Activated CD4-positive, alpha-beta T cell treated with anti-CD3 and anti-CD28 coated beads for 36 hours (primary cell): ENCODE measurements at regions of chr15 and their contacts with region 1.

Region 1: GRCh38 chr15:65304389-65305144 is at the start of gene RNU5B-1:
- DNase-seq: peak; percentile 87
- ATAC-seq: peak; percentile 75
- H3K4me3 Mint-ChIP-seq: peak within 1 kb of the TSS; percentile 89
- H3K27ac Mint-ChIP-seq: peak within 1 kb of the TSS; percentile 98
- H3K4me1 Mint-ChIP-seq: peaks cover 36% of the 10 kb centered on the region
- H3K27me3 Mint-ChIP-seq: no peaks in the 10 kb centered on the region
- total RNA-seq, gene RNU5B-1: not detected

Region 2: DNA sequence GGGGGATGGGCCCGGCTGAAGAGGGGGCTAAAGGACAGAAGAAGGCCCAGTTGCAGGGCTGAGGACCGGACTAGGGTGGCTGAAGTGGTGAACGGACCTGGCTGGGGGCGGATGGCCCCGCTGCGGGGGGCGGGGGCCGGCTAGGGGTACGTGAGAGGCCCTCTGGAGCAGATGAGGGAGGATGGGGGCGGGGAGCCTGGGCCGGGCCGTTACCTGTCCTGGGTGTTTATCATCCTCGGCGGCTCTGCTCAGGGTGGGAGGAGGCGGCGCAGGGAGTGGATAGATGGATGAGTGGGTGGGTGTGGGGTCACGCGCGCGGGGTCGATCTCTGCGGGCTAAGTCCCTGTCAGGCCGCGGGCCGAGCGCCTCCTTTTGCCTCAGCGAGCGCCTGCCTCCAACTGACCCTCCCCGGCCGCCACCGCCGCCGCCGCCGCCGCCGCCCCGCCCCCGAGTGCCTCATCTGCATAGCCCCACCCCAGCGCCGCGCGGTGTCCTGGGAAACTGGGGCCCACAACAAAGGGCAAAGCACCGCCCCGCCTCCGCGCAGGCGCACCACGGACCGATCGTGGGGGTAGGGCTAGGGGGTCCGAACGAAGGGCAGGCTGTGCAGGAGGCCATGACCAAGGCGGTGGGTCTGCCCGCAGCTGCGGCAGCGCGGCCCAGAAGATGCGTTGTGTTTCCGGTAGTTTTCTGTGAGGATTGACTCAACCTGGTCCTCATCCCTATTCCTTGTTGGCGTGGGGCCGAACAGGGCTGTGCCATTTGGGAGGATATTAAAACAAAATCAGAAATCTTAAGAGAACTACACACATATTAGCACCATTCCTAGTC is 601.5 kb before region 1 on chr15:
- CTCF ChIA-PET with region 1: no interaction called
- POLR2A ChIA-PET with region 1: interaction called, 4 read pairs
- intact Hi-C with region 1: loop called in 1 of 2 experiments (anchors 10 kb)
- DNase-seq: peak; percentile 98
- ATAC-seq: peak; percentile 91
- H3K4me3 Mint-ChIP-seq: peak overlapping the region; percentile 72
- H3K27ac Mint-ChIP-seq: peak overlapping the region; percentile 86
- H3K4me1 Mint-ChIP-seq: peaks cover 52% of the 10 kb centered on the region
- H3K27me3 Mint-ChIP-seq: no peaks in the 10 kb centered on the region

Region 3: DNA sequence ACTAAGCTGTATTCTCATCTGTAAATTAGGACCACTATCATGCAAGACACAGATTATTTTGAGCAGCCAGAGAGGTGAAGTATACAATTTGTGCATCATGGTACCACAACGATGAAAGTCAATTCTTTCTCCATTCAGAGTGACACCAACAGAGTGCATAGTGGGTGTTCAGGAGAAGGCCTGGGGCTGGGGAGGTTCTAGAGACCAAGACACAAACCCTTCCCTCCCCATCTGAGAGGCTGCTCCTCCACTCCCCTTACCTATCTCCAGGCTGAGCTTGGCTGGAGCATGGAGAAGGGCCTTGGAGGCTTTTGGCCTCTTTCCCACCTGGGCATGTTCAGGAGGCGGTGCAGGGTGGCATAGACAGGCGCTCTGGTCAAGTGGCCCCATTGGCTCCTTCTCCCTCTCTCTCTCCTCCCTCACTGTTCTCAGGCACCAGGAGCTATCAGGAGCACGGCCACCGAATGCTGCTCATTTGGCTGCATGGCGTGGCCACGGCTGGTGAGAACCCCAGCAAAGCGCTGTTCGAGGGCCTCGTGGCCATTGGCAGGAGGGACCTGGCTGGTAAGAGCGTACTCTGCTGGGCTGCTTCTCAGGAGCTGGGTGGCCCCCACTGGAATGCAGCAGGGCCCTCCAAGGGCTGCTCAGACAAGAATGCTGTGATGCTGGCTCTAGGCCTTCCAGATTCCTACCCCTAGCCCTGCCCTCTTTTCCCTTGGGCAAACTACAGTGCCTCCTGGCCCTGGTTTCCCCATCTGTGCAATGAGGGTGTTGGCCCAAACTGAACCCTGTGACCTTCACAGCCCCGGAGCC is 355.0 kb before region 1 on chr15:
- CTCF ChIA-PET with region 1: no interaction called
- POLR2A ChIA-PET with region 1: no interaction called
- intact Hi-C with region 1: no loop called
- DNase-seq: no peak
- ATAC-seq: no peak
- H3K4me3 Mint-ChIP-seq: no peak overlapping the region
- H3K27ac Mint-ChIP-seq: no peak overlapping the region
- H3K4me1 Mint-ChIP-seq: peaks cover 1% of the 10 kb centered on the region
- H3K27me3 Mint-ChIP-seq: no peaks in the 10 kb centered on the region

Region 4: DNA sequence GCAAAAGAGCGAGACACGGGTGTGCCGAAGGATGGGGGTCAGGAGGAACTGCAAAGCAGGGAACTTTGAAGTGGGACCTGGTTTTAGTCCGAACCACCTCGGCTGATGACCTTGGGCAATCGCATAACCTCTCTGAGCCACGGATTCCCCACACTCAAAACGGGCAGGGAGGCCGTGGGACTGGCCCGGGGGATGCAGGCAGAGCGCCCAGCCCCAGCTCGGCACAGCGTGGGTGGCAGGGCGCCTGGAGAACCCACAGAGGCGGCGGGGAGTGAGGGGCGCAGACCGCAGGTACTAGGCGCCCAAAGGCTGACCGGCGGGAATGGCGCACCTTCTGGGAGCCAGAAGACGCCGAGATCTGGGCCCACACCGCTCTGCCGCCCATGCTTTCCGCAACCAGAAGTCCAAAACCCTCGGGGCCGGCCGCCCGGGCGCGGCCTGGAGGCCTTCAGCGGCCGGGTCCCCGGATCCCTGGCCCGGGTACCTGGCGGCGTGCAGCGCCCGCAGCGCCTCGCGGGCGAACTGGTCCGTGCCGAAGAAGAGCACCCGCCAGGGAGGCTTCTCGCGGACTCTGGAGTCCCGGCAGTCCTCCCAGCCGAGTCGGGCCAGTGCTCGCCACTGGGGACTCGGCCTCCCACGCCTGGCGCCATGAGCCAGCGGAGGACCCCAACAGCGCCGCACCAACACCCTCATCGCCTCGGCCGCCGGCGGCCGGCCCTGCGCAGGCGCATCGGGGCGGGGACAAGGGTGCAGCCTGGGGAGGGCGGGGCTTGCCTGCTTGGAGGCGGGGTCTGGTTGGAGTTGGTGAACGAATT is 275.4 kb before region 1 on chr15 and contains the start of gene MTFMT:
- CTCF ChIA-PET with region 1: interaction called, 4 read pairs
- POLR2A ChIA-PET with region 1: interaction called, 5 read pairs
- intact Hi-C with region 1: loop called (anchors 2 to 5 kb)
- DNase-seq: peak; percentile 96
- ATAC-seq: peak; percentile 95
- H3K4me3 Mint-ChIP-seq: peak within 1 kb of the TSS; percentile 85
- H3K27ac Mint-ChIP-seq: peak within 1 kb of the TSS; percentile 79
- H3K4me1 Mint-ChIP-seq: peaks cover 20% of the 10 kb centered on the region
- H3K27me3 Mint-ChIP-seq: no peaks in the 10 kb centered on the region
- total RNA-seq, gene MTFMT: 19.0 to 19.9 TPM

Region 5: DNA sequence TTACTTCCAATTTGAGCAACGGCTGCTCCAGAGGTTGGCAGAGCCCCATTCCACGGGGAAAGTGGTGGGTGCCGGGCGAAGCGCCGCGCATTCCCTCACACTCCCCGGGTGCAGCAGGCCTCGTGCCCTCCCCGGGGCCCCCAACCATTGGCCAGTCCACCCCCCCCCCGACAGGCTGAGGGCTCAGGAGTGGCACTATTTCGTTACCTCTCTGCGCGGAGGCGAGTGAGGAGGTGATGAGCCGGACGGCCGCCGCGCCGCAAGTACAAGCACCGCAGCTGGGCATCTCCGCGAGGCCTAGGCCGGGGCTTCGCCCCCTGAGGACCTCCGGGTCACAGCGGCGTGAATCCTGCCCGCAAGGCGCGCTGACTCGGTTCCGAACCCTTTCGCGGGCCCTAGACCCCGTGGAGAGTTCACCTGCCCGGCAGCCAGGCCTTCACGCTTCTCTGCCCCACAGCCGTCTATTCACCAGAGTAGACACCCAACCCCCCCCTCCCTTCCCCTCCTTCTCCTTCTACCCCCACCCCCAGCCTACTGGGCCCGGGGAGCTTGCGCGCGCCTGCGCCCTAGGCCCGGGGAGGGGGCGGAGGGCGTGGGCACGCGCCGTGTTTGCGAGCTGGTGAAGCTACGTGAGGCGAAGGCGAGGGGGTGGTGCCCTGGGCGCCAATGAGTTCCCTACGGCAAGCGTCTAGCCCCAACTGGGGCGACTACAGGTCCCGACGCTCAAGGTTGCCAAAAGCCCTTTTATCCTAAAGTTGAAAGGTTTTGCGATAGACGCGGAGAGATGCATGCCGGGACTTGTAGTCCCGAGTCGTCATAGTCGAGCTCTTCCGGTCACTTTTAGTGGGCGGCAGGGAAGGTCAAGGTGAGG is 119.5 kb before region 1 on chr15 and contains the start of gene CLPX:
- CTCF ChIA-PET with region 1: interaction called, 12 read pairs
- POLR2A ChIA-PET with region 1: interaction called, 71 read pairs
- intact Hi-C with region 1: loop called in 1 of 2 experiments (anchors 1 kb)
- DNase-seq: peak; percentile 95
- ATAC-seq: peak; percentile 93
- H3K4me3 Mint-ChIP-seq: peak within 1 kb of the TSS; percentile 92
- H3K27ac Mint-ChIP-seq: peak within 1 kb of the TSS; percentile 89
- H3K4me1 Mint-ChIP-seq: peaks cover 28% of the 10 kb centered on the region
- H3K27me3 Mint-ChIP-seq: no peaks in the 10 kb centered on the region
- total RNA-seq, gene CLPX: 65.2 to 73.7 TPM

Region 6: DNA sequence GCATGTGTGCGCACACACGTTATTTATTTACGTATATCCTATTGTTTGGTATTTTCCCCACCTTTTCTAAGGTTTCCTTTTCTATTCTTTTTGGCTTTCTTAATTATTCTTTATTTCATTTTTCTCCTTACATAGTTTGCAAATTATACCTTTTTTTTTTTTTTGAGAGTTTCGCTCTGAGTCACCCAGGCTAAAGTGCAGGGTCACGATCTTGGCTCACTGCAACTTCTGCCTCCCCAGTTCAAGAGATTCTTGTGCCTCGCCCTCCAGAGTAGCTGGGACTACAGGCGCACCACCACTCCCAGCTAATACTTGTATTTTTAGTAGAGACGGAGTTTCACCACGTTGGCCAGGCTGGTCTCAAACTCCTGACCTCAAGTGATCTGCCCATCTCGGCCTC is 73.3 kb before region 1 on chr15:
- CTCF ChIA-PET with region 1: no interaction called
- POLR2A ChIA-PET with region 1: no interaction called
- intact Hi-C with region 1: no loop called
- DNase-seq: no peak
- ATAC-seq: no peak
- H3K4me3 Mint-ChIP-seq: no peak overlapping the region
- H3K27ac Mint-ChIP-seq: no peak overlapping the region
- H3K4me1 Mint-ChIP-seq: peaks cover 3% of the 10 kb centered on the region
- H3K27me3 Mint-ChIP-seq: no peaks in the 10 kb centered on the region

Region 7: DNA sequence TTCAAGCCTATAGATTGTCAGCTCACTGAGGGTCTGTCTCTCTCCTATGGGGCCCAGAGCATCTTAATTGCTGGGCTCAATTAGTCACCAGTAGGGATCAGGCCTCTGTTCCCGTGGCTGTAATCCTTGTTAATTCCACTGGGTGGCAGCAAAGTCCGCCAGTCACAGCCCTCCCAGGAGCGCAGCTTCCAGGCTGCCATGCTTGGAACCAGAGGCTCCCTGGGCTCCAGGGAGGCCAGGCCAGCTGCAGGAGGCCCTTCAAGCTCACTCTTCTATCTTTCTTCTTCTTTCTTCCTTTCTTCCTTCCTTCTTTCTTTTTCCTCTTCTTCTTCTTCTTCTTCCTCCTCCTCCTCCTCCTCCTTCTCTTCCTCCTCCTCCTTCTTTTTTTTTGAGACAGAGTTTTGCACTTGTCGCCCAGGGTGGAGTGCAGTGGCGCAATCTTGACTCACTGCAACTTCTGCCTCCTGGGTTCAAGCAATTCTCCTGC is 14.3 kb after region 1 on chr15:
- CTCF ChIA-PET with region 1: interaction called, 6 read pairs
- POLR2A ChIA-PET with region 1: interaction called, 25 read pairs
- intact Hi-C with region 1: no loop called
- DNase-seq: peak; percentile 86
- ATAC-seq: peak; percentile 100
- H3K4me3 Mint-ChIP-seq: no peak overlapping the region
- H3K27ac Mint-ChIP-seq: no peak overlapping the region
- H3K4me1 Mint-ChIP-seq: no peaks in the 10 kb centered on the region
- H3K27me3 Mint-ChIP-seq: peaks cover 4% of the 10 kb centered on the region

Region 8: GRCh38 chr15:65618575-65619109 is 314.1 kb after region 1 on chr15:
- CTCF ChIA-PET with region 1: no interaction called
- POLR2A ChIA-PET with region 1: no interaction called
- intact Hi-C with region 1: no loop called
- DNase-seq: no peak
- ATAC-seq: no peak
- H3K4me3 Mint-ChIP-seq: no peak overlapping the region
- H3K27ac Mint-ChIP-seq: no peak overlapping the region
- H3K4me1 Mint-ChIP-seq: no peaks in the 10 kb centered on the region
- H3K27me3 Mint-ChIP-seq: no peaks in the 10 kb centered on the region

Region 9: DNA sequence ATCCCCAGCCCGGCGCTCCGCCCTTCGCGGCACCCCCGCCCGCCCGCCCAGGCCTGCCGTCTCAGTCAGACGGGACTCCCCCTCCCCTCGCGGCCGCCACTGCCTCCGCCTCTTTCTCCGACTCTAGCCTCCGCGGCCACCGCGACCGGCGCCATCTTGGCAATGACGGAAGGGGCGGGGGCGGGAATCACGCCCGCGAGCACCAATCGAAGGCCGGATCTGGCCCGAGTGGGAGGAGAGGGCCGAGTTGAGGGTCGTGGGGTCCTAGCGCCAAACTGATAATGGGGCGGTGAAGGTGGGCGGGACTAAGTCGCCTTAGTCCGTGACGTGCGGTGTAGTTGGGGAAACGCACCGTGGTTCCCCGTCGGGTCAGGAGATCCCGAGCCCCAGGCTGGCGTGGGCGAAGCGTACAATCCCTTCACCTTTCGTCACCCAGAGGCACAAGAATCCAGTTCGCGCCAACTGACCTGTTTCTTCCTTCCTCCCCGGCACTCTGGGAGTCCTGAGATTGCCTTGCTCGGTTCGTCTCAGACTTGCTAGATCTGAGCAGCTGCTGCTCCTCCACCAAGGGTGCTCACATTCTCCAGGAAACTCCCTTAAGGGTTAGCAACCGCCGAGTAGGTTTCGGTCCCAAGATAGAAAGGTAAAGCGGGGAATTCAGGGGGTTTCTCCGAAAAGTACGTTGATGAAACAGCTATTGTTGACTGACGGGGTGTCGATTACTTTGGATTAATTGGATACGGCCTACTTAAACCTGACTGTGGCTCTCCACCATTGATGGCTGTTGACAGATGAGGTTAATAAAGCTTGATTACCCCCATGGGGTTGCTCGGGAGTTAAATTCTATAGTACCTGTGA is 487.8 kb after region 1 on chr15 and contains the start of gene DENND4A:
- CTCF ChIA-PET with region 1: interaction called, 3 read pairs
- POLR2A ChIA-PET with region 1: interaction called, 5 read pairs
- intact Hi-C with region 1: loop called in 1 of 2 experiments (anchors 1 kb)
- DNase-seq: peak; percentile 99
- ATAC-seq: peak; percentile 80
- H3K4me3 Mint-ChIP-seq: peak within 1 kb of the TSS; percentile 80
- H3K27ac Mint-ChIP-seq: peak within 1 kb of the TSS; percentile 98
- H3K4me1 Mint-ChIP-seq: peaks cover 60% of the 10 kb centered on the region
- H3K27me3 Mint-ChIP-seq: no peaks in the 10 kb centered on the region
- total RNA-seq, gene DENND4A: 35.6 to 43.5 TPM

Region 10: GRCh38 chr15:66504563-66505429 is 1200.2 kb after region 1 on chr15 and contains the starts of genes RPL4 and ZWILCH:
- CTCF ChIA-PET with region 1: no interaction called
- POLR2A ChIA-PET with region 1: no interaction called
- intact Hi-C with region 1: loop called in 1 of 2 experiments (anchors 10 kb)
- DNase-seq: peak; percentile 85
- ATAC-seq: peak; percentile 89
- H3K4me3 Mint-ChIP-seq: peak within 1 kb of the TSS; percentile 88
- H3K27ac Mint-ChIP-seq: peak within 1 kb of the TSS; percentile 98
- H3K4me1 Mint-ChIP-seq: peaks cover 56% of the 10 kb centered on the region
- H3K27me3 Mint-ChIP-seq: no peaks in the 10 kb centered on the region
- total RNA-seq, gene RPL4: 4,227 to 4,959 TPM
- total RNA-seq, gene ZWILCH: 27.4 to 31.1 TPM